Psoas muscle (tissue), 8 donors: ENCODE measurements at regions of chr2 and their contacts with region 1.

Region 1: DNA sequence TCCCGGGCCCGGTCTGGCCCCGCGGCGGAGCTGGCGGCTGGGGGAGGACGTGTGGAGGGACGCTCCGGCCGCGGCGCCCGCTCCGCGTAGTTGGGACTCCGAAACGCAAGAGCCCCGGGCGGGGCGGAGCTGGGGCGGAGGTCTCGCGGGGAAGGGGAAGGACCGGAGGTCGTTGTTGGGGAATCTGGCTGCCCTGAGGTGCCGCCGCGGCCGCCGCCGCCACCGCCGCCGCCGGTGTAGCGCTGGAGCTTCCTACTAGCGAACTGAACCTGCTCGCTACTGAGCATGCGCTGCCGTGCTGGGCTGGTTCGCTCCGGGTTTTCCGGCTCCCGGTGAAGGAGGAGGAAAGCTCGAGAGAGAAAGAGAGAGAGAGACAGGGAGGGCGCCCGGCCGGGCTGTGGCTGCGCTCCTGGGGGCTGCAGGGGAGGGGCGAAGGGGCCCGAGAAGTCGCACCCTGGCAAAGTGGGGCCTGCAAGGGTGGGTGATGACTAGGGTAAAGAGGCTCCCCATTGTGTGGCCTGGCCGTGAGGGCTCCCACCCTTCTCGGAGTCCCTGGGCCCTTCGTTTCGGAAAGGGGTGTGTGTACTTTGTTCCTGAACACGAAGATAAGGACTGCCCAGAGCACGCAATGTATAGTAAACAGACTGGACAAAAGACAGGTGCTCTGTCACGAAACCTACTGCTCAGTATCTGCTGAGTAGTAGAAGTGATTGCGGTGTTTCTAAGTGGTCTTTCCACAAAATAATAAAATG is at the start of gene SOS1:
- DNase-seq: peak; percentile 96 to 98
- ATAC-seq: peak; percentile 79 to 83 (median 82)
- H3K4me3 ChIP-seq: peak within 1 kb of the TSS; percentile 92
- H3K27ac ChIP-seq: peak within 1 kb of the TSS; percentile 94
- H3K4me1 ChIP-seq: peaks cover 50% of the 10 kb centered on the region
- H3K27me3 ChIP-seq: no peaks in the 10 kb centered on the region
- CTCF ChIP-seq: no peak
- total RNA-seq, gene SOS1: 25.4 to 35.7 (median 33.1) TPM

Region 2: DNA sequence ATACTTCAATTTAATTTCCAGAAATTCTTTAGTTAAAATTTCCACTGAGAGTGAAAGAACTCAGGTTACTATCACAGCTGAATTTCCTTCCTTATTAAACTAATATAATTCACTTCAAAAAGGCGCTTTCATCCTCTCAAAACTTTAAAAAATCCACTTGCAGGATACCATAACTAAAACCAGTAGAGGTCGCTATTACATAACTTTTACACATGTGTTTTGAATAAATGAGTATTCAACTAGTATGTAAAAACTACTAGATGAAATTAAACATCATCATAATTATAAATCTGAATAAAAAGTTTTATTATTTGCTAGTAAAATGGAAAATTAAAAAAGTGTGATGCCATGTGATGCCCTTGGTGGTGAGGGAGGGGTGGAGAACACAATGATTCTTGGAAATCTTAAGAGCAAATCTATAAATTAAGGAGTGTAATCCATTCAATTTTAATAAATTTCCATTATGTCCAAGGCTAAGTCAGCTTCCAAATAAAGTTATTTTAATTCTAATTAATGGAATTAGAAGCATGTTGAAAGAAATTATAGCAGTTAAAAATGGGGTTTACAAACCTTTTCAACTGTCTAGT is 61.5 kb before region 1 on chr2:
- intact Hi-C with region 1: loop called in 1 of 2 experiments (anchors 1 kb)
- DNase-seq: no peak
- ATAC-seq: peak in 2 of 4 donors; percentile 54 to 80
- H3K4me3 ChIP-seq: no peak overlapping the region
- H3K27ac ChIP-seq: no peak overlapping the region
- H3K4me1 ChIP-seq: peaks cover 3% of the 10 kb centered on the region
- H3K27me3 ChIP-seq: no peaks in the 10 kb centered on the region
- CTCF ChIP-seq: peak; percentile 79